Activated CD4-positive, alpha-beta T cell treated with anti-CD3 and anti-CD28 coated beads, Interleukin-2, amount 10 ng/mL, durations not matched to agents 7 days and 5 days (primary cell): ENCODE measurements at regions of chr15 and their contacts with region 1.

Region 1: DNA sequence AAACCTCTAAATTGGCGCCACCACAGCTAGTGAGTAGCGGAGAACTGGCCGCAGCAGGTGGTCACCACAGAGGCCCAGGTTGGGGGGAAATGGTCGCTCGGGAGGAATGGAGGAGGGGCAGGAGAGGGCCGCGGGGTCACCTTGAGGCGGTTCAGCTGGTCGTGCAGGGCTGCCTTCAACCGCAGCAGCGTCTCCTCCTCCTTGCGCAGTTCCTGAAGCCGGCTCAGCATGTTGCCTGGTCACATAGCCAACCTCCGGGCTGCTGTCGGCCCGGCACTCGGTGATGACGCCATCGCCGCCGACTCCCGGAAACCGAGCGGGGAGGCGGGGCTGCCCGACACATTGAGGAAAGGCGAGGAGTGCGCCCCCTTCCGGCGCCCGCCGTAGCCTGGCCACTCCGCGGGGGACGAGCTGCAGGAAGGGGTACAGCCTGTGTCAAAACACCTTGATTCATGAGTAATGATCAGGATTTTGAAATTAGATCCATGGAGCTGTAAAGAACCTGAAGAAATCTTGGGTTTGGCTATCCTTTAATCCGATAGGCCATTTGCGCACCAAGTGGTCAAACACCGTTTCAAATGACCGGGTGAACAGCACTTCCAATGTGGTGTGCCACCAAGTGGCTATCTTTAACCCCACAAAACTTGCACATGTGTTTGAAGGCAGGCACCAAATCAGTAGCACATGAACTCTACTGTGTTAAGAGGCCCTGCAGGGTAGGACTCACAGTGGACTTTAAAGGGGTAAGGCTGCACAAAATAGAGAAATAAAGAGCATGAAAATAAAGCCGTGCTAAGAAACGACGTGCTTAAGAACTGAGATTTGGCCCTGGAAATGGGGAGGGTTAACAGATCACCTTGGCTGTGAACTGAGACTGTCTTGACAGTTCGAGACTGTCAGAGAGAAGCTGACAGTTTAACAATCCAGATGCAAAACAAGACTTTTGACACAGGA is at the start of gene SNAPC5:
- DNase-seq: peak; percentile 98
- H3K4me3 Mint-ChIP-seq: peak within 1 kb of the TSS; percentile 97
- H3K27ac Mint-ChIP-seq: peak within 1 kb of the TSS; percentile 96
- H3K4me1 Mint-ChIP-seq: peaks cover 72% of the 10 kb centered on the region
- H3K27me3 Mint-ChIP-seq: no peaks in the 10 kb centered on the region
- total RNA-seq, gene SNAPC5: 21.4 to 24.5 TPM

Region 2: DNA sequence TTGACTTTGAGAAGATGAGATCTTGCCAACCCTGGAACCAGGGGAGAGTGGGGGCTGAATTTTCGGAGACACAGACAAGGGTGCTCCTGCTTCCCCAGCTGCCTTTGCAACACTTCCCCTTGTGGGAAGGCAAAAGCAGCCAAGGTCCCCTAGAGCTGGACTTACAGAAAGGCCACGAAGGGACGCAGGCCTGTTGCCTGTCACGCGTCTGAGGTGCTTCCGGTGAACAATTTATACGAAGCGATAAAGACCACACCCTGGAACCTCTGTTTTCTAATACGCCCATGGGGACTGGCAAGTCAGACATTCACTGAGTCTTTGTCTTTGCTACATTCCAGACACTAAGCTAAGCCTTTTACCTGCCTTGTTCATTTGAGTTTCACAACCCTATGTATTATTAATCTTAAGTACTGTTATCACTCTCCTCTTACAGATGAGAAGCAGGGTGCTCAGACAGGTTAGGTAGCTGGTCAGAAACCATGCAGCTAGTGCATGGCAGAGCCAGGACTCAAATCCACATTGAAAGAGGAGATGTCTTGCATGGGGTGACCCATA is 257.5 kb before region 1 on chr15:
- CTCF ChIA-PET with region 1: no interaction called
- POLR2A ChIA-PET with region 1: no interaction called
- DNase-seq: no peak
- H3K4me3 Mint-ChIP-seq: no peak overlapping the region
- H3K27ac Mint-ChIP-seq: no peak overlapping the region
- H3K4me1 Mint-ChIP-seq: no peaks in the 10 kb centered on the region
- H3K27me3 Mint-ChIP-seq: peaks cover 14% of the 10 kb centered on the region

Region 3: GRCh38 chr15:66356345-66357236 is 141.2 kb before region 1 on chr15 and contains the start of gene TIPIN:
- CTCF ChIA-PET with region 1: interaction called, 18 read pairs
- POLR2A ChIA-PET with region 1: interaction called, 3 read pairs
- DNase-seq: peak; percentile 99
- H3K4me3 Mint-ChIP-seq: peak within 1 kb of the TSS; percentile 95
- H3K27ac Mint-ChIP-seq: peak within 1 kb of the TSS; percentile 98
- H3K4me1 Mint-ChIP-seq: peaks cover 35% of the 10 kb centered on the region
- H3K27me3 Mint-ChIP-seq: no peaks in the 10 kb centered on the region
- total RNA-seq, gene TIPIN: 25.0 to 28.0 TPM

Region 4: DNA sequence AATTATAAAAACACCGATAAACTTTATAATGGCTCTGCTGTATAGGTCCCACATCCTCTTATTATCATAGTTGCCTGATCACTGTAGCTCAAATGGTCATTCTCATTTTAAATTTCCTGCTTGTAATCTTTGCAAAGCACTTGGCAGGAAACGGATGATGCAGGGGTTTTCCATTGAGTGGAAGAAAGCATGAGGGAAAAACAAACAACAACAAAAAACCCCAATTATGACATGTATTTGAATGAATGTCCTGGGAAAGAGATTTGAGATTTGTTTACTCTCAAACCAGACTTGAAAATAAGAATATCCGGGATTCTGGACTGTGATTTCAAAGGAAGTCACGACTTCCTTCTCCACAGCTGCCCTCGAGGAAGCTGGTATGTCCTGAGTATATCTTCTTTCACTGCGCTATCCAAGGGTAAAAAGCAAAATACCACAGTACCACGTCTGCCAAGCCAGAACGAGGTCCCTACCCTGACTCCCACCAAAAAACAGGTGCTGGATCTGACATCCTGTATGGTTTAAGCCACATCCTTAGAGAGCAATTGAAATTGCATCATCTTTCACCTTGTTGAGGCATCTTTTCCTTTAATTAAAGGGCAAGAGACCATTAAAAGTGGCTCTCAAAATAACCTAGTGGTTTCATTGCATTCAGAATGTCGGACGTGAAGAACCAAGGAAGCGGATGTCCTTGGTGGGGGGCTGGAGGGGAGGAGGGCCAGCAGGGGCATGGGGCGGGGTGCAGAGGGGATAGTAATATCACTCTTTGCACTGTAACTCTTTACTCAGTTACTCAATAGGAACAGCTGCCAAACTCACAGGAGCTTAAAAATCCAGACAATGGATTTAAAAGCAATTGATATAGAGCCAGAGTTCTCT is 127.8 kb before region 1 on chr15:
- CTCF ChIA-PET with region 1: interaction called, 11 read pairs
- POLR2A ChIA-PET with region 1: no interaction called
- DNase-seq: peak; percentile 44
- H3K4me3 Mint-ChIP-seq: peak overlapping the region; percentile 51
- H3K27ac Mint-ChIP-seq: peak overlapping the region; percentile 90
- H3K4me1 Mint-ChIP-seq: peaks cover 23% of the 10 kb centered on the region
- H3K27me3 Mint-ChIP-seq: no peaks in the 10 kb centered on the region

Region 5: DNA sequence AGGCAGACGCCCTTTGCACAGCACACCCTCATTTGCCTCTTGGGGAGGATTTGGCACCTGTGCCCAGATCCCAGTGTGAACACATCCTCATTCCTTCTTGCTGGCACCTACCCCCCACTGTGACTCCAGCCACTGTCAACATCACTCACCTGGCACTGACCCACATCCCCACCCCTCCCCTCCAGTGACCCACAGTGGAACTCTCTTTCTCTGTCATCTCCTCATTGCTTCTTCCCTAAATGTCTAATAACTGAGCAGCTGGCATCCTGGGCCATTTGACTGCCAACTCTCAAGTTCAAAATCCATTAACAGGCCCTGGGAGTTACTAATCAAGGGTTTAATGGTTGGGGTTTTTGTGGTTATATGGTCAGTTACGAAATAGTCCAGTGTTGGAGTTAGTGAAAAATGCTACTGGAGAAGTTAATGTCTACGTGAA is 14.6 kb before region 1 on chr15:
- CTCF ChIA-PET with region 1: interaction called, 20 read pairs
- POLR2A ChIA-PET with region 1: no interaction called
- DNase-seq: no peak
- H3K4me3 Mint-ChIP-seq: no peak overlapping the region
- H3K27ac Mint-ChIP-seq: no peak overlapping the region
- H3K4me1 Mint-ChIP-seq: peaks cover 5% of the 10 kb centered on the region
- H3K27me3 Mint-ChIP-seq: no peaks in the 10 kb centered on the region

Region 6: GRCh38 chr15:66573719-66574595 is 76.2 kb after region 1 on chr15:
- CTCF ChIA-PET with region 1: no interaction called
- POLR2A ChIA-PET with region 1: no interaction called
- DNase-seq: no peak
- H3K4me3 Mint-ChIP-seq: no peak overlapping the region
- H3K27ac Mint-ChIP-seq: no peak overlapping the region
- H3K4me1 Mint-ChIP-seq: no peaks in the 10 kb centered on the region
- H3K27me3 Mint-ChIP-seq: no peaks in the 10 kb centered on the region